Aorta (tissue), 5 donors: ENCODE measurements at regions of chr4 and their contacts with region 1.

Region 1: GRCh38 chr4:140049024-140049848 is 104.7 kb downstream of the MAML3 start:
- DNase-seq: peak in 1 of 2 donors; percentile 46
- ATAC-seq: peak; percentile 80
- H3K4me3 ChIP-seq: peak overlapping the region; percentile 7 to 55
- H3K27ac ChIP-seq: peak overlapping the region in 1 of 2 donors; percentile 1
- H3K4me1 ChIP-seq: peaks cover 3 to 6% of the 10 kb centered on the region in 2 donors
- H3K27me3 ChIP-seq: no peaks in the 10 kb centered on the region

Region 2: GRCh38 chr4:139740531-139741041 is 308.6 kb before region 1 on chr4:
- intact Hi-C with region 1: loop called in 1 of 2 experiments (anchors 5 kb)
- DNase-seq: peak; percentile 71 to 83
- ATAC-seq: peak; percentile 86
- H3K4me3 ChIP-seq: no peak overlapping the region
- H3K27ac ChIP-seq: peak overlapping the region in 1 of 2 donors; percentile 77
- H3K4me1 ChIP-seq: peaks cover 0 to 3% of the 10 kb centered on the region in 2 donors
- H3K27me3 ChIP-seq: no peaks in the 10 kb centered on the region

Region 3: DNA sequence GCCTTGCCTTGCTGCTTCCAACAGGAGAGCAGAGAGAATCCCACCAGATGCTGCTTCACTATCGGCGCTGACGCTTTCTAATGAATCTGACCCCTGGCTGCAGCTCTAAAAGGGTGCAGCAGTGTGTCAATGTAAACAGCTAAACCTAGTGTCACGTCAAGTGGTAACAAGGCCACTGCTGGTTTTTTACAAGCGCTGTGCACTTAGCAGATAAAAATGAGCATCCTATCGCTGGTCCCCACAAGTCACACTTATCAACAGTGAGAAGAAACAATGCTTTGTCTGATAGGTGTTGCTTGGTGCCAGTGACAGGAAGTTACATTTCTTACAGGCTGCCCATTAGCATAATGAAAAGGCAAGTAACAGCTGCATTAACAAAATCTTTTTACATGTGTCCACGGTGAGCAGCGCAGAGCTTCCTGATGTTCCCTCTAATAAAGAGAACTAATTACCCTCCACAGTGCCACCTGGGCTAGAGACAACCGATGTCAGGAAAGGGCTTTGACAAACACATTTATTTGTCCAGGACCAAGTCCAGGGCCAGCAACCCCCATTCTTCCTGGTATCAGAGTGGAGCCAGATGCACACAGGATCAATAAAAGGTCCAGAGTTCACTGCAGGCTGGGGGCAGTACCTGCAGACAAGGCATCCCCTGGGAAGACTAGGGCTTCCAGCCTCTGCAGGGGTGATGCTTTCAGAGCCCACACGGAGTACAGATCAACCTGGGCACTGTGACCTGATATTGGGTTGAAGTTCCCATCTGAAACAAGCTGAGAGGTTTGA is 207.6 kb before region 1 on chr4:
- intact Hi-C with region 1: no loop called
- DNase-seq: no peak
- ATAC-seq: no peak
- H3K4me3 ChIP-seq: no peak overlapping the region
- H3K27ac ChIP-seq: no peak overlapping the region
- H3K4me1 ChIP-seq: no peaks in the 10 kb centered on the region
- H3K27me3 ChIP-seq: no peaks in the 10 kb centered on the region

Region 4: DNA sequence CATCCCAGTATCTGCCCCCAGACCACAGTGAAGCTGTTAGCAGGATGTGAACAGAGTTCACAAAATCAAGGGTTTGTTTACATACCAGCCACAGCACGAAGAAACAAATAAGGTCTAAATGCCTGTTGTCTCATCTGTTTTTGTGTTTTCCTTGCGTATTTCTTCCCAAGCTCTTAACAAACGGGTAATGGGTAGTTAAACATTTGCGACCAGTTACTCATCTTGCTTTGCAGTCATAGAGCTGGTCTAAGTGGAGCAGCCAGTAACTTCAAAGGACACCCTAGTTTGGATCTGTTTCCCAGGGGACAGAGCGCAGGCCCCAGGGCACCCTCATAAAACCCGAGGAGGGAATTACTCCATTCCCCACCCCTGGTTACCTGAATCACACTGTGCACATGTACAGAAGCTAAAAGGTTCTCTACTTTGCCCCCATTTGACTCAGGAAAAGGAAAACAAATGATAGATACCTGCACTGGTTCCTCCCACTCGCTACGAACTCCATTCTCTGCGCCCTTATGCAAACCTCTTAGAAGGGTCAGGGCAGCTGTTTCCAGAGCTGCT is 35.9 kb after region 1 on chr4:
- intact Hi-C with region 1: loop called in 1 of 2 experiments (anchors 5 kb)
- DNase-seq: no peak
- ATAC-seq: no peak
- H3K4me3 ChIP-seq: no peak overlapping the region
- H3K27ac ChIP-seq: peak overlapping the region; percentile 23 to 94
- H3K4me1 ChIP-seq: peaks cover 10 to 12% of the 10 kb centered on the region in 2 donors
- H3K27me3 ChIP-seq: no peaks in the 10 kb centered on the region